ENCODE measurements at regions of chr12 and their contacts with region 1.

Region 1: GRCh38 chr12:117228239-117228638 is 38.0 kb upstream of the FBXO21 start:
- DNase-seq: no peak
- ATAC-seq: no peak
- H3K4me3 ChIP-seq: no peak overlapping the region
- H3K27ac ChIP-seq: no peak overlapping the region
- H3K4me1 ChIP-seq: no peaks in the 10 kb centered on the region
- H3K27me3 ChIP-seq: no peaks in the 10 kb centered on the region

Region 2: DNA sequence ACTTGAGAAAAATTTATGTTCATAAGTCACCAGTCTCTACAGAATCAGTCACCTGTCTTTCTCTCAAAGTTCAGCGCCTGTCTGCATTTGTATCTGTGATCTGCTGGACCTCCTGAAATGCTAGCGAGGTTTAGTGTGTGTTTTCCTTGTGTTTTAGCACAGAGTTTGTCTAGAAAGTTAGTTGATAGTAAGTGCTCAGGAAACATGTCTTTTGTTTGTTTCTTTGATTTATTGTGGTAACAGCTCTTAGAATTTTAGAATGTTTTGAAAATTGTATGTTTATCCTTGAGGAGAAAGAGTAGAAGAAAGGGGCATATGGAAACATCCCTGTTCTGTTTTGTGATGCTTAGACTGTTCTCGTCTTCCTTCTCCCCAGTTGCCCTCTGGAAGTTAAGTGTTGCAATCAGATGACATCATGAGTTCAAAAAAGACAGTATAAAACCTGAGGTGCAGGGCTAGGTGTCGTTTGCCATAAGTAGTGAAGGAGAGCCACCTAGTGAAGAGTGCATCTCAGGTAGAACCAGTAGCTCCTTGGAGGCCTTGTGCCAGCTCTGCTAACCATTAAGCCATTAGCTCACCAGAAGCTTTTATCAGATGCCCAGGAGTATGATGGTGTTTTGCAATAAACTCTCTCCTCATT is 272.7 kb before region 1 on chr12:
- intact Hi-C with region 1: no loop called
- DNase-seq: no peak
- ATAC-seq: peak in 1 of 2 donors; percentile 45
- H3K4me3 ChIP-seq: no peak overlapping the region
- H3K27ac ChIP-seq: no peak overlapping the region
- H3K4me1 ChIP-seq: peaks cover 5% of the 10 kb centered on the region
- H3K27me3 ChIP-seq: no peaks in the 10 kb centered on the region

Region 3: GRCh38 chr12:117842630-117843029 is 614.4 kb after region 1 on chr12:
- intact Hi-C with region 1: loop called in 1 of 4 experiments (anchors 5 kb)
- DNase-seq: no peak
- ATAC-seq: no peak
- H3K4me3 ChIP-seq: no peak overlapping the region
- H3K27ac ChIP-seq: no peak overlapping the region
- H3K4me1 ChIP-seq: no peaks in the 10 kb centered on the region
- H3K27me3 ChIP-seq: no peaks in the 10 kb centered on the region

Measured in right cardiac atrium (tissue), 5 donors.